K562 (cell line): ENCODE measurements at regions of chr22 and their contacts with region 1.

Region 1: DNA sequence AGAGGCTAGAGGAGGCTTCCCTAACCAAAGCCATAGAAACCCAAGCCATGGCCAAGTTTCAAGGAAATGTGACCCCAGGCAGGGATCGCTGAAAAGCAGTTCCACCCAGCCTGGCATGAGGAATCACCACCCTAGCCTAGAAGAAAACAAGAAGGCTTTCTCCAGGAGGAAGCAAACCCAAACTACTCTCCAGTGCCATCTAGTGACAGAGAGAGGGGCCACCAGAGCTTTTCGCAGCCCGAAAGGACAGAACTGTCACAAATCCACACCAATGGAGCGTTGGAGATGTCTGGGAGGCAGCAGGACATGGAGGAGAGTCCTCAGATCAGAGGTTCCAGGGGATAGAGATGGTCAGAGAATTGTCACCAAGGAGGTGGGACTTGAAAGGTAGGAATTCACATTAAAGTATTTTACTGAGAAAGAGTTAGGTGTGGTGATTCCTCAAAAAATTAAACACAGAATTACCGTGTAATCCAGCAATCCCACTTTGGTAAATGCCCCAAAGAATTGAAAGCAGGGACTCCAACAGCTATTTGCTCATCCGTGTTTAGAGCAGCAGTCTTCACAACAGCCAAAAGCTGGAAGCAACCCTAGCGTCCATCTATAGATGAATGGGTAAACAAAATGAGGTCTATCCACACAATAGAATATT is 67.3 kb upstream of the NUP50 start:
- DNase-seq: peak; percentile 49 to 58 (median 55)
- ATAC-seq: peak; percentile 84
- H3K4me3 ChIP-seq: no peak overlapping the region
- H3K27ac ChIP-seq: no peak overlapping the region
- H3K4me1 ChIP-seq: no peaks in the 10 kb centered on the region
- H3K27me3 ChIP-seq: peaks cover 3 to 28% of the 10 kb centered on the region in 2 experiments
- CTCF ChIP-seq: peak; percentile 70 to 74 (median 71)
- EP300 ChIP-seq: no peak
- POLR2A ChIP-seq: no peak
- RAD21 ChIP-seq: peak; percentile 10 to 58; a peak in 2 of 4 replicates

Region 2: GRCh38 chr22:44819971-44820631 is 276.3 kb before region 1 on chr22:
- CTCF ChIA-PET with region 1: no interaction called
- POLR2A ChIA-PET with region 1: no interaction called
- in situ Hi-C with region 1: no loop called
- intact Hi-C with region 1: loop called (anchors 2 kb)
- DNase-seq: no peak
- ATAC-seq: no peak
- H3K4me3 ChIP-seq: no peak overlapping the region
- H3K27ac ChIP-seq: no peak overlapping the region
- H3K4me1 ChIP-seq: peaks cover 0 to 4% of the 10 kb centered on the region in 2 experiments; a peak in 1 of 5 replicates
- H3K27me3 ChIP-seq: peaks cover 2 to 47% of the 10 kb centered on the region in 2 experiments; a peak in 2 of 5 replicates
- CTCF ChIP-seq: no peak
- EP300 ChIP-seq: no peak
- POLR2A ChIP-seq: no peak
- RAD21 ChIP-seq: no peak

Region 3: GRCh38 chr22:45254789-45255278 is 158.5 kb after region 1 on chr22:
- CTCF ChIA-PET with region 1: no interaction called
- POLR2A ChIA-PET with region 1: interaction called, 3 read pairs
- in situ Hi-C with region 1: loop called (anchors 5 kb)
- intact Hi-C with region 1: no loop called
- DNase-seq: no peak
- ATAC-seq: no peak
- H3K4me3 ChIP-seq: no peak overlapping the region
- H3K27ac ChIP-seq: no peak overlapping the region
- H3K4me1 ChIP-seq: peaks cover 0 to 2% of the 10 kb centered on the region in 2 experiments; a peak in 2 of 5 replicates
- H3K27me3 ChIP-seq: 0 out of 5 replicates have a peak, but pooled peaks cover 0 to 2% of the 10 kb centered on the region in 2 experiments
- CTCF ChIP-seq: no peak
- EP300 ChIP-seq: no peak
- POLR2A ChIP-seq: no peak
- RAD21 ChIP-seq: no peak